ENCODE measurements at regions of chr2 and their contacts with region 1.

Region 1: DNA sequence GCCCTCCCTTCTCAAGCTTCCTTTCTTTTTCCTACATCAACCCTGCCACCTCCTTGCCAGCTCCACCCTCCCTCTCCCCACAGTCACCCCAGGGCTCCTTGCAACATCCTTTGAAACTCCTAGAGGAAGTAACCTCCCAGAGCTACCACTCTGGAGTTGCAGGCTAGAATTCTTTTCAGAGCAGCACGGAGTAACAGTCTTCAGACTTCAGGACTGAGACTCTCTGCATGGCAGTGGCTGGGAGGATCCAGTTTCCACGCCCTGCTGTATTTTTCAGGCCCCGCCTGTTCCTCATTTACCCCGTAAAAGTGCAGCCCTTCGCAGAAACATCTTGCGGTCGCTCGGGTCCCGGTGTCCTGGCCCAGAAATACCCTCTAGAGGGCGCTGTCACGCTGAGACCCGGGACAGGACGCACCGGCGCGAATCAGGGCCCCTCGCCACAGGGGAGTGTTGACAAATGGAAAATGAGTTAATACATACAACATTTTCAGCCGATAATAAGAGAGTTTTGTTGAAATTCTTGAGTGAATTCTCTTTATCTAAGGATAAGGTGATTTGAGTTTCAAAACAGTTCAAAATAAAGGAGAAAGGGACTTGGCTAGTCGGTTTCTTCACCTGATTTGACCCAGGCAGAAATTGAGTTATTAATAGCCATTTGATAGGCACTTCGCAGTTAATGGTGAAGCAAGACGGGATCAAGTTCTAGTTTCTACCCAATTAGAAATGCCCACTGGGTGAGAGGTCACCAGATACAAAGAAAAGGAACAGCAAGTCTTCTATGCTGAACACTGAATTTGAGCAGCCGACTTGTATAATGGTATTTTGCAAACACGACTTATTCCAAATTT is 18.5 kb upstream of the NTSR2 start:
- DNase-seq: peak; percentile 85 to 91 (median 87)
- H3K4me3 ChIP-seq: peak overlapping the region in 2 of 3 donors; percentile 21 to 24
- H3K27ac ChIP-seq: no peak overlapping the region
- H3K4me1 ChIP-seq: peaks cover 0 to 5% (median 3%) of the 10 kb centered on the region in 3 donors
- H3K27me3 ChIP-seq: no peaks in the 10 kb centered on the region
- CTCF ChIP-seq: peak; percentile 69

Region 2: DNA sequence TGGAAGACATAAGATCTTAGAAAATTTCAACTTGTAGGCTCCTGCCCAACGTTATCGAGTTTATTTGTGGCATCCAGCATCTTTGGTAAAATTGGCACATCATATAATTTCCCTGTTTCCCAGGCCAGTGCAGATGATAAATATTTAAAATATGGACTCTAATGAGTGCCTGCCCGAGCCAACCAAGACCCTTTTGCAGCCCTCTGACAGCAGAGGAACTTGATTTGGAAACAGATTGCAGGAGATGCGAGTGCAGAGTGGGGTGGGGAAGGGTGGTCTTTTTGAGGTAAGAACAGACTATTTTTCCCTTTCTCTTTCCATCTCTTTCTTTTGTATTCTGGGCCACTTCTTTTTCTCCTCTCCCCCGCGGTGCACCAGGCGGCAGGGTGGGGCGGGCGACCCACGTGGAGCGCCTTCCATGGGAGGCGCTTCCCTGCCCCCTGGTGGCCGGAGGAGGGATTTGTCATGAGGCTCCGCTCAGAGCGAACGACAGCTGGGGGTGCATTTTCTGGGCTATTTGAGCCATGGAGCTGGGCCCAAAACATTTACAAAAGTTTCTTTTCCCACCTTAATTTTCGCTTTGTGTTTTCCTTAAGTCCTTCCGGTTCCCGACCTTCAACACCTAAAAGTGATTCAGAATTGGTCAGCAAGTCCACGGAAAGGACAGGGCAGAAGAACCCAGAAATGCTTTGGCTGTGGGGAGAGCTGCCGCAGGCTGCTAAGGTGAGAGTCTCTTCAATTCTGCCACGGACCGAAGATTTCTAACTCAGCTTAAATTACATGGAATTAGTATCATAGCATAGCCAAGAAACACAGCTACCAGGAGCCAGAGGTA is 90.7 kb after region 1 on chr2:
- intact Hi-C with region 1: loop called (anchors 10 kb)
- DNase-seq: peak; percentile 79 to 91 (median 84)
- H3K4me3 ChIP-seq: no peak overlapping the region
- H3K27ac ChIP-seq: no peak overlapping the region
- H3K4me1 ChIP-seq: peaks cover 0 to 3% (median 0%) of the 10 kb centered on the region in 3 donors
- H3K27me3 ChIP-seq: no peaks in the 10 kb centered on the region
- CTCF ChIP-seq: peak; percentile 92

Region 3: DNA sequence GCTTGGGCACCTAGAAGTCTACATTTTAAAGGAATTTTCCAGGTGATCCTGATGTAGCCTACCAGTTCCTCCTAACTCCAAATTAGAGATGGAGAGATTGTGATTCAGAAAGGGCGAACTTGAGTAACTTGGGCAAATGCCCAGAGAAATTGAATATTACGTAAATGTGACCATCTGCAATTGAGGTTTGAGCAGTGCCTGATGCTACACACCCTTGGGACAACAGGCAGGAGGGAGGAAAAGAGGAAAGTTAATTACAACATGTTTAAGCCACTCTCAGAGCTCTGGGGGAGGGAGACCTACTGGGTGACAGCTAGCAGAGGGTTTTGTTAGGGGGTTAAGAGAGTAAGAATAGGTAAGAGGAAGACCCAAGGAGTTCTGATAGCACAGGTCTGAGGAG is 266.9 kb after region 1 on chr2:
- intact Hi-C with region 1: loop called (anchors 10 kb)
- DNase-seq: no peak
- H3K4me3 ChIP-seq: no peak overlapping the region
- H3K27ac ChIP-seq: no peak overlapping the region
- H3K4me1 ChIP-seq: no peaks in the 10 kb centered on the region
- H3K27me3 ChIP-seq: no peaks in the 10 kb centered on the region
- CTCF ChIP-seq: no peak

Measured in kidney (tissue), 22 donors.